ENCODE measurements at regions of chr13 and their contacts with region 1.

Region 1: DNA sequence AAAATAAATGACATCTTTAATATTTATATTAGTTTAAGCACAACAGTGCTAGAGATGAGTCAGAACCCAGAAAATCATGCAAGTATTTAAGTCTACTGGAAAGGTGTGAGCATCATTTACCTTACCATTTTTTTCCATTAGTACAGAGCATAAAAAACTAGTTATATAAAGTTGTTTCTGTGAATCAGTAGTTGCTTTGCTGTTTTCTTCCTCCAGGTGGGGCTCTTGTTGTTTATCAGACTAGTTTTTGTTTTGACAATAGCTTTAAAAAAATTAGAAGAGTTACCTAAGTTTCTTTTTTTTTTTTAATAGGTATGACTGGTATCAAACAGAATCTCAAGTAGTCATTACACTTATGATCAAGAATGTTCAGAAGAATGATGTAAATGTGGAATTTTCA is 12.7 kb downstream of the SUGT1 start:
- DNase-seq: no peak
- H3K4me3 ChIP-seq: no peak overlapping the region
- H3K27ac ChIP-seq: no peak overlapping the region
- H3K27me3 ChIP-seq: no peaks in the 10 kb centered on the region
- CTCF ChIP-seq: peak; percentile 54

Region 2: GRCh38 chr13:52652196-52652979 is 12.9 kb before region 1 on chr13 and contains the start of gene SUGT1:
- CTCF ChIA-PET with region 1: interaction called, 40 read pairs
- POLR2A ChIA-PET with region 1: interaction called, 6 read pairs
- DNase-seq: peak; percentile 93
- H3K4me3 ChIP-seq: peak within 1 kb of the TSS; percentile 98
- H3K27ac ChIP-seq: peak within 1 kb of the TSS; percentile 100
- H3K27me3 ChIP-seq: no peaks in the 10 kb centered on the region
- CTCF ChIP-seq: peak; percentile 73
- polyA plus RNA-seq, gene SUGT1: 44.9 and 64.8 TPM in 2 replicates

Region 3: DNA sequence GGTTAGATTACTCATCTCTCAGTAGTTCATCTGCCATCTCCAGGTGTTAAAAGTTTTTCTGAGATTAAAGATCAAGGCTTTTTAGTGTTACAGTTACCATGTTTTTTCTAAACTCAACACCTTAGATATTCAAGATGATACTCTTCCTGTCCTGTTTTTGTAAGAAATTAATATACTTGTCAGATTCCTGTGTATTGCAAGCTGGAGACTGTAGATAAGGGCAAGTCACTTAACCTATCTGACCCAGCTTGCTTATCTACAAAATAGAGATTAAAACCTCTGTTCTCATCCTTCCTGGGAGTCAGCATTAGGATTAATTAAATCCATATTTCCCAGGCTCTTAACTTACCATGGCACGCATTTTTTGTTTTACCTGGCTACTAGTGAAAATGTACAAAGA is 12.5 kb after region 1 on chr13:
- CTCF ChIA-PET with region 1: interaction called, 24 read pairs
- POLR2A ChIA-PET with region 1: no interaction called
- DNase-seq: no peak
- H3K4me3 ChIP-seq: no peak overlapping the region
- H3K27ac ChIP-seq: no peak overlapping the region
- H3K27me3 ChIP-seq: no peaks in the 10 kb centered on the region
- CTCF ChIP-seq: no peak

Region 4: DNA sequence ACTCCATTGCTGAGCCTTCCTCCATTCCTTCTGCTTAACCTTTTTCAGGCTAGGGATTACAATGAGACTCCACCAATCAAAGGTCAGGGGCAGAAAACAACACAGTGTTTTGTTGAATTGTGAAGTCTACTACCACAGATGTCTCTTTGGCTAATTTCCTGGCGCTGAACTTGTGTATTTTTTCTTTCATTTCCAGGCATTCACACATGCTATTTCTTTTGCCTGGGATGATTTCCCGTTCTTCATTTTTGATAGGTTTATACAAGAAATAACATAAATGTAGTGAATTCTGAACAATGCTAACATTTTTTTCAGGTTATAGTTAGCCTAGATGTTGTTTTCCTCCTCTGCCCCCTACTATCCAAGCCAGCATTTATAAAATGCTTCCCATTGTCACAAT is 427.6 kb after region 1 on chr13:
- CTCF ChIA-PET with region 1: no interaction called
- POLR2A ChIA-PET with region 1: no interaction called
- DNase-seq: no peak
- H3K4me3 ChIP-seq: no peak overlapping the region
- H3K27ac ChIP-seq: no peak overlapping the region
- H3K27me3 ChIP-seq: no peaks in the 10 kb centered on the region
- CTCF ChIP-seq: no peak